Left colon (tissue), 2 donors: ENCODE measurements at regions of chr9 and their contacts with region 1.

Region 1: GRCh38 chr9:130042833-130043653 is at the start of gene FNBP1:
- DNase-seq: peak; percentile 79 to 85
- ATAC-seq: peak; percentile 88
- total RNA-seq, gene FNBP1: 27.2 to 53.0 TPM

Region 2: GRCh38 chr9:129962889-129963703 is 79.9 kb before region 1 on chr9:
- intact Hi-C with region 1: loop called in 1 of 2 experiments (anchors 10 kb)
- DNase-seq: peak; percentile 52 to 69
- ATAC-seq: peak; percentile 97

Region 3: GRCh38 chr9:130654879-130655278 is 611.8 kb after region 1 on chr9:
- intact Hi-C with region 1: no loop called
- DNase-seq: no peak
- ATAC-seq: no peak